GM18951 (cell line): ENCODE measurements at regions of chr7 and their contacts with region 1.

Region 1: DNA sequence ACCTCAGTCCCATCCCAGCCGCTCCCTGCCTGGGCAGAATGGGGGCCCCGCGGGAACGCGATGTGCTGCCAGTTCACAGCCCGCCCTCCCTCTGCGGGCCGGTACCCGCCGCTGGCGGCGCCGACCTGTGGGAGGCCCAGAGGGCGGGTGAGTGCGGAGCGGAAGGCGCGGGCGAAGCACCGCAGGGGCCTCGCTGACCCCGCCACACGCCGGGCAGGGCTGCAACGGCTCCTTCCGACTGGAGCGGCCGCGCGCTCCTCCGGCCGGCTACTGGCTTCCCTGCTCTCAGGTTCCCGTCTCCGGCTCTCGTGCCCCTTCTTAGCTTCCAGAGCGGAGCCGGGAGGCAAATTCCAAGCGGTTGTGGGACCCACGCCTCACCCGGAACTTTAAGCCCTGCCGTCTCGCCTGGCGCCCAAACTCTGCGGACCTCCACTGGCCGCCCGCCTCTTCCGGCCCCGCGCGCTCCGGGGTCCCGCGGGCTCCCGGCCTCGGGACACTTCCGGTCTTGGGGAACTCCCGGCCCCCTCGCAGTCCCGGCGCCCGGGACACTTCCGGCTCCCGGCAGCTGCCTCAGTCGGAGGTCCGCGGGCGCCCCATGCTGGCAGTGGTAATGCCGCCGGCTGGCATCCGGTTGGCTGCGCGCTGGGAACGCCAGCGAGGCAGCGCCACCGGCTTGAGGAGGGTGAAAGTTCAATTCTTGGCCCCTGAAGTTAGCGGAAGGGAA is at the start of gene CYREN:
- POLR2A ChIP-seq: peak; percentile 74

Region 2: DNA sequence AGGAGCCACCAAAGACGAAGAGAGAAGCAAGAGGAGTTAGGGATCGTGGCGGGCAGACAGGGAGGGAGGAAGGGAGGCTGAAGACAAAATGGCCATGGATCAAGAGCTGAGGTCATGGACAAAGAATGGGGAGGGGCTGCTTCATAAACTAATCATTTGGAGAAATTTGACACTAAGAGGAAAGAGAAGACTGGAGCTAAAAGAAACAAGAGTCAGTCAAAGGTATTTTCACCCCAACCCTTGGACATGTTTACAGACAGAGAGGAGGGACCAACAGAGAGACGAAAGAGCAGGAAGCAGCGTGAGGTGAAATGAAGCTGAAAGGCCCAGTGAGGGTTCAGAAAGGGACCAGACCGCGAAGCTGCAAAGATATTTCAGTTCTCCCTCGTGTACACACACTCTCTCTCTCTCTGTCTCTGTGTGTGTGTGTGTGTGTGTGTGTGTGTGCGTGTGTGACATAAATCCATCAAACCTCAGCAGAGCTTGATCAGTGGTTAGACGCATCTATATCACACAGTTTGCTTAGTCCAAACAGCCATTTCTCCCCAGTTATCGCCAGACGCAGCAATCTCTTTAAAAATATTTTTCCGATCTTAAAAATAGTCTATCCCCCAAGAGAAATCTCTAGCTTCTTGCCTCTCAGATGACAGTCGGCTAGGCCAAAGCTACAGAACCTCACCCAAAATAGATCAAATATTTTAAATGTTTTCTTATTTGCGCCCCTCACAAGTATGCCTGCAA is 403.5 kb before region 1 on chr7:
- in situ Hi-C with region 1: loop called (anchors 10 kb)
- POLR2A ChIP-seq: no peak

Region 3: GRCh38 chr7:134922720-134923704 is 247.4 kb before region 1 on chr7:
- in situ Hi-C with region 1: no loop called
- POLR2A ChIP-seq: no peak

Region 4: DNA sequence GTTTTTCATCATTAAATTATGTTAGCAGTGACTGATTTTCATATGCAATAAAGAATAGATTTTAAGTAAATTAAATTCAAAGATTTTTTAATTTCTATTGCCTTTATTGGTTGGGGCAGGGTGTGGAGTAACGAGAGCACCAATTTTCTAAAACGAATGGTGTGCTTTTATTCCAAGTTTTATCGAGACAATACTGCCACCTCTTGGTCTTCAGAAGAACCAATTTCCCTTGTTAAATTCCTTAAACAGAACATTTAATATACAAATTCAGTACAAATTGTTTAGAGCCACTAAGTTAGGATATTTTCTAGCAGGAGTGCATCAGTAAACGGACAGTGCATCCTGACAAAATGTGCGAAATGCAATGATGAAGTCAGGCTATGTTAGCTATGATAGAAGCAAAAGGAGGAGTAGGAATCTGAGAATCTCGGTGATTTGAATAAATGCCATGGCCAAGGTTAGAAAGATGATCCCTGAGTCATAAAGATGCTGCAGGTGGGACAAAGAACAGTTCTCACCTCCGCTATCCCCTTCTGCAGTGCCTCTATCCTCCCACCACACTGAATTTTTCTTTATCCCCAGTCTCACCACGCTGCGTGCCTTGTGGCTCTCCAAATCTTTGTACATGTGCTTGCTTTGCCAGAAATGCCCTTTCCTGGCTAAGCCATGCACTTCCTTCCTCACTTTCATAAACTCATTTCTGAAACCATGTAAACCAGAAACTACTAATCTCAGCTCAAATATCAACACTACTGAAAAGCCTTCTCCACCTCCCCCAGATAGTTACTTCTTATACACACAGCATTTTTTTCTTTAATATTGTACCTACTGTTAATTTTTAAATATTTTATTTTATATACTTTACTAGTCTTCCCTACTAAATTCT is 216.0 kb before region 1 on chr7:
- in situ Hi-C with region 1: loop called (anchors 5 kb)
- POLR2A ChIP-seq: no peak